ENCODE measurements at regions of chr10 and their contacts with region 1.

Region 1: GRCh38 chr10:61943674-61944410 is 42.3 kb downstream of the ARID5B start:
- DNase-seq: peak; percentile 80
- H3K4me3 ChIP-seq: peak overlapping the region in 1 of 3 experiments; percentile 66
- H3K27ac ChIP-seq: peak overlapping the region; percentile 58
- H3K4me1 ChIP-seq: peaks cover 32% of the 10 kb centered on the region
- H3K27me3 ChIP-seq: no peaks in the 10 kb centered on the region
- CTCF ChIP-seq: peak in 1 of 2 donors; percentile 18
- POLR2A ChIP-seq: no peak

Region 2: GRCh38 chr10:61974601-61975390 is 31.0 kb after region 1 on chr10:
- CTCF ChIA-PET with region 1: interaction called, 6 read pairs
- POLR2A ChIA-PET with region 1: no interaction called
- dilution Hi-C with region 1: no loop called
- intact Hi-C with region 1: loop called (anchors 2 kb)
- DNase-seq: peak; percentile 78
- H3K4me3 ChIP-seq: no peak overlapping the region
- H3K27ac ChIP-seq: no peak overlapping the region
- H3K4me1 ChIP-seq: peaks cover 26% of the 10 kb centered on the region
- H3K27me3 ChIP-seq: no peaks in the 10 kb centered on the region
- CTCF ChIP-seq: no peak
- POLR2A ChIP-seq: no peak

Region 3: DNA sequence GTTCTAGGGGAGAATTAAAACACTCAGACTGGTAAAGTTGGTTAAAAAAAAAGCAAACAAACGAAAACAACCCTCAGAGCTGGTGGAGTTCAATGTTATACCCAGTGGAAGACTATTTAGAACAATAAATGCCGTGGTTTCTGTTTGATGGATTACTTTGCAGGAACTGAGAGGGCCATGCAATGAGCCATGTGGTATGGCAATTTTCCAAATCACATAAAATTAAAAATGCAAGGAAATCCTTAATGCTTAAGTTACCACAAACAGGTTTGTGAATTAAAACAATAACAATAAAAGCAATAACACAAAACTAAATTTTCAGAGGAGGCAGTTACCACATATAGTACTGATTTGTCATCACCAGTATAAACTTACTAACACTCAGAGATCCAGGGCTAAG is 227.9 kb after region 1 on chr10:
- CTCF ChIA-PET with region 1: no interaction called
- POLR2A ChIA-PET with region 1: no interaction called
- dilution Hi-C with region 1: no loop called
- intact Hi-C with region 1: loop called (anchors 5 kb)
- DNase-seq: peak; percentile 80
- H3K4me3 ChIP-seq: no peak overlapping the region
- H3K27ac ChIP-seq: no peak overlapping the region
- H3K4me1 ChIP-seq: no peaks in the 10 kb centered on the region
- H3K27me3 ChIP-seq: no peaks in the 10 kb centered on the region
- CTCF ChIP-seq: no peak
- POLR2A ChIP-seq: no peak

Measured in endothelial cell of umbilical vein (primary cell).